ENCODE measurements at regions of chr4 and their contacts with region 1.

Region 1: DNA sequence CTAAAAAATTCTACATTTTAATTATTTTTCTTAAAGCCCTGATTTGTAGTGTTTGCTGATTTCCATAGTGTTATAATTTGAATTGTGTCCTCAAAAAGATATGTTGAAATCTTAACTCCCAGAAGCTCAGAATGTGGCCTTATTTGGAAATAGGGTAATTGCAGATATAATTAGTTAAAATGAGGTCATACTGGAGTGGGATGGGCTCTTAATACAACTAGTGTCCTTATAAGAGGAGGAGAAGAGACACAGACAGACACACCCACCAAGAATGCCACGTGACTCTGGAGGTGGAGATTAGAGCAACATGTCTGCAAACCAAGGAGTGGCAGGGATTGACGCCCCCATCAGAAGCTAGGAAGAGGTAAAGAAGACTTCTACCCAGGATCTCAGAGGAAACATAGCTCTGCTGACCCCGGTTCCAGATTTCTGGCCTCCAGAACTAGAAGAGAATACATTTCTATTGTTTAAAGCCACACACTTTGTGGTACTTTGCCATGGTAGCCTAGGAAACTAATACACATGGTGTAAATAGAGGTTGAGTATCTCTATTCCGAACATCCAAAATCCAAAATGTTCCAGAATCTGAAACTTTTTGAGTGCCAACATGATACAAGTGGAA is 70.5 kb upstream of the IRF2 start:
- DNase-seq: no peak
- H3K4me3 ChIP-seq: no peak overlapping the region
- H3K27ac ChIP-seq: no peak overlapping the region
- H3K4me1 ChIP-seq: peaks cover 0 to 21% (median 7%) of the 10 kb centered on the region in 6 donors
- H3K27me3 ChIP-seq: no peaks in the 10 kb centered on the region
- CTCF ChIP-seq: no peak
- POLR2A ChIP-seq: no peak

Region 2: GRCh38 chr4:184649026-184649970 is 104.4 kb after region 1 on chr4 and contains the starts of genes CASP3 and PRIMPOL:
- intact Hi-C with region 1: loop called (anchors 10 kb)
- DNase-seq: peak; percentile 100
- H3K4me3 ChIP-seq: peak within 1 kb of the TSS; percentile 64 to 90 (median 78)
- H3K27ac ChIP-seq: peak within 1 kb of the TSS; percentile 93 to 99 (median 96)
- H3K4me1 ChIP-seq: peaks cover 36 to 68% (median 52%) of the 10 kb centered on the region in 6 donors
- H3K27me3 ChIP-seq: no peaks in the 10 kb centered on the region
- CTCF ChIP-seq: peak in 9 of 11 experiments; percentile 12 to 63 (median 41)
- POLR2A ChIP-seq: peak in 2 of 3 donors; percentile 71 to 94
- total RNA-seq, gene CASP3: 26.1 to 48.3 (median 30.3) TPM
- total RNA-seq, gene PRIMPOL: 17.0 to 46.7 (median 22.8) TPM

Measured in spleen (tissue), 13 donors.